ENCODE measurements at regions of chr18 and their contacts with region 1.

Region 1: GRCh38 chr18:76528477-76529432 is 33.7 kb upstream of the ZNF516 start:
- DNase-seq: peak in 1 of 2 donors; percentile 26
- ATAC-seq: peak; percentile 43 to 48
- H3K4me3 ChIP-seq: peak overlapping the region; percentile 28 to 46 (median 36)
- H3K27ac ChIP-seq: peak overlapping the region; percentile 28 to 45 (median 43)
- H3K4me1 ChIP-seq: peaks cover 0 to 9% of the 10 kb centered on the region in 2 donors
- H3K27me3 ChIP-seq: peaks cover 30 to 43% (median 34%) of the 10 kb centered on the region in 3 donors
- CTCF ChIP-seq: no peak
- POLR2A ChIP-seq: no peak

Region 2: DNA sequence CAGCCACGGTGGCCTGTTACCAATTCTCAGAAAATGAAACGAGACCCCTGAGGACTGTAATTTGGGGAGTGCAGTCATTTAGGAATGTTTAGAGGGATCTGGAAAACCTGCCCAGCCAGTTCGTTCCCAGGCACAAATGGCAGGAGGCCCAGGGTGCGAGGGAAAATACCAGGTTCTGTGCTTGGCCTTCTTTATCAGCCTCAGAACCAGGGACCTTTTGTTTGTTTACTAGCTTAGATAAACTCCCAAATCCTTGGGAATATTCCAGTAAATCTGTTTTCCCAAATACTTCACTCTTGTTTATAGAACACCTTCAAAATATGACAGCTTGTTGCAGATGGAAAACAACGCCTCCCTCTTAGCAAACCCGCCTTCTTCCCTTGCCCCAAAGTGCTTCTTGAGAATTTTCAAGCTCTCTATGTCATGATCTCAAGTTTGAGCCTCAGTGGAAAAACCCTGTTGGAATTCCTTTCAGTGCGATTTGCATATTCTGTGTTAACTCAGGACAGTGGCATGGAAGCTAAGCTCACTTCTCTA is 700.9 kb before region 1 on chr18:
- in situ Hi-C with region 1: no loop called
- intact Hi-C with region 1: no loop called
- DNase-seq: no peak
- ATAC-seq: no peak
- H3K4me3 ChIP-seq: no peak overlapping the region
- H3K27ac ChIP-seq: no peak overlapping the region
- H3K4me1 ChIP-seq: no peaks in the 10 kb centered on the region
- H3K27me3 ChIP-seq: no peaks in the 10 kb centered on the region
- CTCF ChIP-seq: no peak
- POLR2A ChIP-seq: no peak

Region 3: GRCh38 chr18:76620321-76621170 is 91.8 kb after region 1 on chr18:
- in situ Hi-C with region 1: no loop called
- intact Hi-C with region 1: loop called (anchors 10 kb)
- DNase-seq: peak; percentile 15 to 59
- ATAC-seq: peak; percentile 44 to 80
- H3K4me3 ChIP-seq: peak overlapping the region; percentile 36 to 55 (median 44)
- H3K27ac ChIP-seq: peak overlapping the region in 2 of 4 donors; percentile 47 to 52
- H3K4me1 ChIP-seq: peaks cover 8 to 10% of the 10 kb centered on the region in 2 donors
- H3K27me3 ChIP-seq: no peaks in the 10 kb centered on the region
- CTCF ChIP-seq: peak; percentile 3 to 69 (median 27)
- POLR2A ChIP-seq: no peak

Measured in gastrocnemius medialis (tissue), 4 donors.